Dorsolateral prefrontal cortex (tissue), 120 donors: ENCODE measurements at regions of chr19 and their contacts with region 1.

Region 1: DNA sequence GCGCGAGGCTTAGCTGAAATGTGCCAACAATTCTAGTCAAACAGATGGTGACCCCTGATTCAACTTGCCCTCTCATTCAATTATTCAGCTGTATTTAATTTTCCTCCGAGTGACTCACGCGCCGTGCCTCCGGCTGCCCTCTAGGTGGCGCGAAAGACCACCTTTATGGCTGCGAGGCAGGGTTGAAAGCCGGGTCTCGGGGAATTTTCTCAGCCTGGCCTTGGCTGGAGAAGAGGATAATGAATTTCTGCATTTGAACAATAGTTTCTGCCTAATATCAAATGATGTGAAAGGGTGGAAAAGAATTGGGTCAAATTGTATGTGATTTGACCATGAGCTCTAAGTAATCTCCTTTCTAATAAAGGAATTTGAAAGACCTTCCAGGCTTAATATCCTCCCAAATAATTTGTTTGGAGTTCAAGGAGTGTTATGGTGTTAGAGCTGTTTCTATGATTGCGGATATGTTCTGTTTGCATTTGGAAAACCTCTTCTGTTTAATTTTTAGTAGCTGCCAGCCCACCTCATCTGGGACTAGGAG is 310.9 kb downstream of the ZNF536 start:
- DNase-seq: peak; percentile 66 to 86 (median 80)
- H3K4me3 ChIP-seq: peak overlapping the region in 44 of 59 donors; percentile 1 to 52 (median 36)
- H3K27ac ChIP-seq: peak overlapping the region in 22 of 59 donors; percentile 1 to 77 (median 44)
- H3K27me3 ChIP-seq: no peaks in the 10 kb centered on the region
- CTCF ChIP-seq: peak; percentile 85 to 99 (median 94)

Region 2: DNA sequence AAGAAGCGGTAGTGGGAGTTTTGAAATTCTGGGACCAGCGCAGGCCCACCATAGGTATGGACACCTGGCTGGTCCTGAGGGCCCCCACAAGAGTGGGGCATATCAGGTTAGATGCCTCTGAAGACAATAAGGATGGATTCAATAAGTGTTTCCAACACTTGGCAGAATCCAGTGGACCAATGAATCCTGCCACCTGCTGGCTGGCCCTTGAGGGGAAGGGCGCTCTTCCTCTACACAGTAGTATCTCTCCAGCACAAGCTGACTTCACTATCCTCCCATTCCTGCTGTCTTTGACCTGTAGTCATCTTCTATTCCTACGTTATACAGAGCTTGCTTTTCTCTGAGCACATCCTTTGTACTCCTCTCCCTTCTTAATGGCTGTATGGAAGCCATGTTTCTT is 865.9 kb after region 1 on chr19:
- intact Hi-C with region 1: loop called in 1 of 2 experiments (anchors 10 kb)
- DNase-seq: no peak
- H3K4me3 ChIP-seq: no peak overlapping the region
- H3K27ac ChIP-seq: no peak overlapping the region
- H3K27me3 ChIP-seq: peaks cover 0 to 17% (median 0%) of the 10 kb centered on the region in 45 donors
- CTCF ChIP-seq: peak in 50 of 56 donors; percentile 17 to 62 (median 38)

Region 3: DNA sequence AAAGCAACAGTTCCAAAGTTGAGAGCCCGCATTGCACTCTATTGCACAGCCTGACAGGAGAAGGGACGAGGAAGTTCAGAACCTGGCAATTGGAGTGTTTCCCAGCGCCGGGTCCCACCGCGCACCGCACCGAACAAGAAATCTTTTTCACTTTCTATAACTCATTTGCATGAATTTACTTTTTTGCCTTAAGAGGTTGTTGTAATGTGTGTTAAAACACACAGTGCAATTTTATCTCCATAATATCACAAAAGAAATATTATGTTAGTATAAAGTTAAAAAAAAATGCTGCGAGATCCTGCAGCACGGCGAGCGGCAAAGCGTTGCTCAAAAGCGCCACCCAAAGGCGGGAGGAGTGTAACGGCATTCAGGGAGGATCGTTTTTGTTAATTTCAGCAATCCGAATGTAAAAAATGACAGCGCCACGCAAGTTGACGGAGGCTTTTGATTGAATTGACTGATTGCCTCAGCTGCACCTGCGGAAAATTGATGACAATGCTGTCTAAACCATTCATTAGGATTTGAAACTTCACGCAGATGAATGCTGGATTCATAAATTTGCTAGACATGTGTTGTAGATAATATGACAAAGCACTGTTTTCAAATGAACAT is 1358.7 kb after region 1 on chr19:
- intact Hi-C with region 1: loop called in 1 of 2 experiments (anchors 5 kb)
- DNase-seq: peak in 8 of 10 donors; percentile 11 to 59 (median 45)
- H3K4me3 ChIP-seq: peak overlapping the region in 58 of 59 donors; percentile 12 to 65 (median 41)
- H3K27ac ChIP-seq: no peak overlapping the region
- H3K27me3 ChIP-seq: peaks cover 0 to 51% (median 18%) of the 10 kb centered on the region in 45 donors
- CTCF ChIP-seq: peak; percentile 53 to 90 (median 78)

Region 4: GRCh38 chr19:32324631-32325285 is 1641.7 kb after region 1 on chr19:
- intact Hi-C with region 1: loop called in 1 of 2 experiments (anchors 10 kb)
- DNase-seq: no peak
- H3K4me3 ChIP-seq: peak overlapping the region in 35 of 59 donors; percentile 3 to 54 (median 30)
- H3K27ac ChIP-seq: no peak overlapping the region
- H3K27me3 ChIP-seq: peaks cover 0 to 5% (median 0%) of the 10 kb centered on the region in 45 donors
- CTCF ChIP-seq: peak in 51 of 56 donors; percentile 16 to 70 (median 45)